Caco-2 (cell line): ENCODE measurements at regions of chr1 and their contacts with region 1.

Region 1: GRCh38 chr1:154982897-154983648 is at the start of gene FLAD1:
- DNase-seq: peak; percentile 98 to 100
- H3K4me3 ChIP-seq: peak within 1 kb of the TSS; percentile 82
- H3K4me3 Mint-ChIP-seq: no peak within 1 kb of the TSS
- H3K27ac Mint-ChIP-seq: no peak within 1 kb of the TSS
- H3K4me1 ChIP-seq: no peaks in the 10 kb centered on the region; the same call in 1 of the 2 replicates
- H3K4me1 Mint-ChIP-seq: no peaks in the 10 kb centered on the region
- H3K27me3 ChIP-seq: no peaks in the 10 kb centered on the region
- H3K27me3 Mint-ChIP-seq: no peaks in the 10 kb centered on the region
- CTCF ChIP-seq: no peak
- total RNA-seq, gene FLAD1: 51.3 and 61.5 TPM in 2 replicates

Region 2: GRCh38 chr1:154747740-154748404 is 235.2 kb before region 1 on chr1:
- CTCF ChIA-PET with region 1: no interaction called
- POLR2A ChIA-PET with region 1: no interaction called
- intact Hi-C with region 1: no loop called
- DNase-seq: no peak
- H3K4me3 ChIP-seq: no peak overlapping the region
- H3K4me3 Mint-ChIP-seq: no peak overlapping the region
- H3K27ac Mint-ChIP-seq: no peak overlapping the region
- H3K4me1 ChIP-seq: no peaks in the 10 kb centered on the region
- H3K4me1 Mint-ChIP-seq: no peaks in the 10 kb centered on the region
- H3K27me3 ChIP-seq: peaks cover 3% of the 10 kb centered on the region
- H3K27me3 Mint-ChIP-seq: peaks cover 38% of the 10 kb centered on the region
- CTCF ChIP-seq: no peak

Region 3: GRCh38 chr1:155569988-155570592 is 587.0 kb after region 1 on chr1:
- CTCF ChIA-PET with region 1: interaction called, 10 read pairs
- POLR2A ChIA-PET with region 1: no interaction called
- intact Hi-C with region 1: no loop called
- DNase-seq: no peak
- H3K4me3 ChIP-seq: no peak overlapping the region
- H3K4me3 Mint-ChIP-seq: no peak overlapping the region
- H3K27ac Mint-ChIP-seq: no peak overlapping the region
- H3K4me1 ChIP-seq: peaks cover 6% of the 10 kb centered on the region
- H3K4me1 Mint-ChIP-seq: no peaks in the 10 kb centered on the region
- H3K27me3 ChIP-seq: no peaks in the 10 kb centered on the region
- H3K27me3 Mint-ChIP-seq: no peaks in the 10 kb centered on the region
- CTCF ChIP-seq: no peak